ENCODE measurements at regions of chr2 and their contacts with region 1.

Region 1: DNA sequence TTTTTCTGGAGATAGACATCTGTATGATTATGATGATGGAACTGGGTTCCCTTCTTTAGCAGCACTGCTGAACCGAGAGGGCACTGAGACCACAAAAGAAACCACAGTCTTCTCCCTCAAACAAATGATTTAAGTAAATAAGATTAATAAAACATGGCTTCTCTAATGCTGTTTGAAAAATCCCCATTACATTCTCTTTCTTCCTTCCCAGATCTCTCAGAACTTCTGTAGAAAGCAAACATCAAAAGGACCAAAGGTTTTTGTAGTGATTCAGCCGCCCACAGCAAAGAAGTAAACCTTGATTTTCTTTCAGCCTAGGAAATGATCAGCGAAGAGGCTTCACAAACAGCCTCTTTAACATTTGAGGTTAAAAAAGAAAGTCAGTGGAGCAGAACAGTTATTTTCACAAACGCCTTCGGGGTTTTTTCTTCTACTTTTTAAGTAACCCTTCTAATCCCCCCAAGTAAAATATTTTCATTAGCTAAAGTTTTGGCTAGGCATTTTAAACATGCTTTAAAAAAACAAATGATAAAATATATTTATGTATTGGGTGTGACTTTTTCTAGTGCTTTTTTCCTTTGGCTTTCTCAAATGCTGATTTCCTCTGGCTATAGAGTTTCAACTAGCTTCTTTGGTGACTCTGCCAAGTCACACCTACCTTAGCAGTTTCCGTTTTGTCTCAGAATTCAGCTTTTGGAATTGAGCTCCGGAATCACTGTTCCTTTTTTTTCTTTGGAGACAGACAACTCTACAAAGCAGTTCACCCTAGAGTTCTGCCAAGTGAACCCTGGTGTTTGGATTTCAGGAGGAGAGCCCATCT is 89.6 kb downstream of the UPP2 start:
- DNase-seq: peak; percentile 6
- H3K4me3 Mint-ChIP-seq: peak overlapping the region; percentile 50
- H3K27ac Mint-ChIP-seq: peak overlapping the region; percentile 40
- H3K4me1 Mint-ChIP-seq: peaks cover 28% of the 10 kb centered on the region
- H3K27me3 Mint-ChIP-seq: peaks cover 24% of the 10 kb centered on the region

Region 2: GRCh38 chr2:157257312-157258252 is 933.7 kb before region 1 on chr2 and contains the start of gene GALNT5:
- intact Hi-C with region 1: no loop called
- DNase-seq: no peak
- H3K4me3 Mint-ChIP-seq: no peak within 1 kb of the TSS
- H3K27ac Mint-ChIP-seq: no peak within 1 kb of the TSS
- H3K4me1 Mint-ChIP-seq: peaks cover 28% of the 10 kb centered on the region
- H3K27me3 Mint-ChIP-seq: peaks cover 4% of the 10 kb centered on the region
- total RNA-seq, gene GALNT5: not detected in 2 replicates

Region 3: GRCh38 chr2:158391876-158392275 is 200.6 kb after region 1 on chr2:
- intact Hi-C with region 1: loop called (anchors 1 kb)
- DNase-seq: no peak
- H3K4me3 Mint-ChIP-seq: no peak overlapping the region
- H3K27ac Mint-ChIP-seq: no peak overlapping the region
- H3K4me1 Mint-ChIP-seq: peaks cover 9% of the 10 kb centered on the region
- H3K27me3 Mint-ChIP-seq: peaks cover 8% of the 10 kb centered on the region

Region 4: DNA sequence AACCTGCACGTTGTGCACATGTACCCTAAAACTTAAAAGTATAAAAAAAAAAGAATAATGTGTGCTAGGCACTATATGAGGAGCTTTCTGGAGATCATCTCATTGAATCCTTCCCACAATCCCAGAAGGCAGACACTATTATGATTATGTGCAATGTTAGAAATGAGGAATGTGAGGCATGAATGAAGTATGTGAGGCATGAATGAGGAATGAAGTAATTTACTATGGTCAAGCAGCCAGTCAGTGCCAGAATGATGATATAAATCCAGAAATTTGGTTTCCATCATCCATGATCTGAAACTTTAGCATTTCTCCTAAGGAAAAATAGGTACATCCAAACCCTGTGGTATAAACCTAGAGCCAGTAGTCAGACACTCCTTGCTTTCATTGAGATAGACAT is 223.3 kb after region 1 on chr2:
- intact Hi-C with region 1: no loop called
- DNase-seq: no peak
- H3K4me3 Mint-ChIP-seq: no peak overlapping the region
- H3K27ac Mint-ChIP-seq: no peak overlapping the region
- H3K4me1 Mint-ChIP-seq: no peaks in the 10 kb centered on the region
- H3K27me3 Mint-ChIP-seq: no peaks in the 10 kb centered on the region

Measured in activated T-helper 1 cell treated with anti-CD3 and anti-CD28 coated beads, Interleukin-12 subunit alpha, Interleukin-12 subunit beta, Interleukin-2, Interleukin-4 antibody, amounts not matched to agents 30 ng/mL and 10 ng/mL and 1 ng/mL, durations not matched to agents 14 hours and 24 hours and 36 hours (primary cell).